ENCODE measurements at regions of chr2 and their contacts with region 1.

Region 1: DNA sequence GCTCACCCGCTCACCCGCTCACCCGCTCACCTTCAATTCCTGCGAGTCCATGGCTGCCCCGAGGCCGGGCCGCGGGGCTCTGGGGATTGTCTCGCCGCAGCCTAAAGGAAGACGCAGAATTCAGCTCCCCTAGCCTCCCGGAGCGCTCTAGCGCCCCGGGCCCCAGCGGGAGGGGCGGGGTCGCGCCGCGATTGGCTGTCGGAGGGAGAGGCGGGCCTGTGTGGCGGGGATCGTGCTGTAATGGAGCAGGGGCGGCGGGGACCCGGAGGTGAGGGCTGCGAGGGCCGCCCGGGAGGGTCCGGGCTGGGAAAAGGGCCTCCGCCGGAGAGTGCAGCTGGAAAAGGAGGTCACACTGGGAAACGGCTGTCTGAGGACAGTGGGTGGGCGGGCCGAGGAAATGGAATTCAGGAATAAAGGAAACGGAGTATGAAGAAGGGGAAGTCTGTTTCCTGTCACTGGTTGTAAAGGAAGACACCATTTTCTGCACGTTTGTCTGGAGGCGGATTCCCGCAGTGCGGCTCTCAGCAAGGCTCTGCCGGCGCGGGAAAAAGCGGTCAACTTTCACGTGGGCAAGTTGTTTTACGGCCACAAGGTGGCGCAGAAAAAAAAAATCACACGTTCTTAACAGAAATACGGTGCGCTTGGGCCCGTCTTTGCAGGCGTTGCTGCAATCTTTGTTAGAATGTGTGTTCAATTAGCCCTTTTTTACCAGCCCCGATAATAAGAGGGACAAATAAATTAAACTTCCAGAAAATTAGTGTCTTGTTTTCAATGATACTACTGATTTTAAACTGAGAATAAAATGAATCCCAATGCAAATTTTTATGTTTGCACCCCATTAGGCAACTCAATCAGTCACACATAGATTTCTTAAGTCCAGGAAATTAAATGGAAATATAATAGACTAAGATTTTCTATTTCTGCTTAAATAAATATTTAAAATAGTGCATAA is at the start of gene TTC21B:
- DNase-seq: peak; percentile 97
- H3K4me3 ChIP-seq: peak within 1 kb of the TSS; percentile 60 to 99 (median 93)
- H3K27ac ChIP-seq: peak within 1 kb of the TSS; percentile 81
- H3K4me1 ChIP-seq: peaks cover 17% of the 10 kb centered on the region
- H3K27me3 ChIP-seq: no peaks in the 10 kb centered on the region
- CTCF ChIP-seq: peak; percentile 76 to 78
- POLR2A ChIP-seq: peak; percentile 75
- total RNA-seq, gene TTC21B: 18.0 and 21.9 TPM in 2 replicates

Region 2: GRCh38 chr2:165911231-165911630 is 42.7 kb before region 1 on chr2:
- CTCF ChIA-PET with region 1: interaction called, 5 read pairs
- POLR2A ChIA-PET with region 1: no interaction called
- dilution Hi-C with region 1: no loop called
- intact Hi-C with region 1: loop called (anchors 2 kb)
- DNase-seq: no peak
- H3K4me3 ChIP-seq: no peak overlapping the region
- H3K27ac ChIP-seq: no peak overlapping the region
- H3K4me1 ChIP-seq: peaks cover 22% of the 10 kb centered on the region
- H3K27me3 ChIP-seq: no peaks in the 10 kb centered on the region
- CTCF ChIP-seq: no peak
- POLR2A ChIP-seq: no peak

Region 3: DNA sequence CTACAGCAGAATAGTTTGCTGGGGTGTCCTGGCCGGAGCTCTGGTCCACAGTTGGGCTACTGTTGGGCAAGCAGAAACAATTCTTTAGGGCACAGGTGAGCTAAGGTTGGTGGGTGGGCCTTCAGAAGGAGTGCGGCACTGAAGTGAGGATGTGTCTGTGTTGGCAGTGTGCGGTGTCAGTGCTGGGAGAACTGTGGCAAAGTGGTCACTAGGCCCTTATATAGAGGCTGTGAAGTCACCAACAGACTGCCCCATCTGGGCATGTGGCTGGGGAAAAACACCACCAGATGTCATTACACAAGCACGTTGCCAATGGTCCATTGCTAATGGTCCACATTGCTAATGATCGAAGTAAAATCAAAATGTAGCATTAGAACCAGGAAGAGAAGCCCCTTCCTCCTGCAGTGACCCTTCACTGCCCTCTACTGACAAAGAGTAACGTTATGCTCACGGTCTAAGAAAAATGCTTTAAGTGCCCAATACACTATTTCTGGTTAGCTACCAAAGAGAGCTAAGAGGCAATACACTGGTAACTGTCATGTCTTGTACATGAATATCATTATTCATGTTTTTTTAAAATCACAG is 152.6 kb after region 1 on chr2:
- CTCF ChIA-PET with region 1: interaction called, 17 read pairs
- POLR2A ChIA-PET with region 1: no interaction called
- dilution Hi-C with region 1: no loop called
- intact Hi-C with region 1: loop called (anchors 1 kb)
- DNase-seq: peak; percentile 68
- H3K4me3 ChIP-seq: no peak overlapping the region
- H3K27ac ChIP-seq: no peak overlapping the region
- H3K4me1 ChIP-seq: no peaks in the 10 kb centered on the region
- H3K27me3 ChIP-seq: no peaks in the 10 kb centered on the region
- CTCF ChIP-seq: peak; percentile 47 to 63
- POLR2A ChIP-seq: no peak

Region 4: GRCh38 chr2:166234112-166234846 is 280.3 kb after region 1 on chr2:
- CTCF ChIA-PET with region 1: no interaction called
- POLR2A ChIA-PET with region 1: no interaction called
- dilution Hi-C with region 1: no loop called
- intact Hi-C with region 1: loop called (anchors 2 kb)
- DNase-seq: peak; percentile 88
- H3K4me3 ChIP-seq: no peak overlapping the region
- H3K27ac ChIP-seq: peak overlapping the region; percentile 95
- H3K4me1 ChIP-seq: peaks cover 44% of the 10 kb centered on the region
- H3K27me3 ChIP-seq: no peaks in the 10 kb centered on the region
- CTCF ChIP-seq: no peak
- POLR2A ChIP-seq: no peak